ENCODE measurements at regions of chr13 and their contacts with region 1.

Region 1: DNA sequence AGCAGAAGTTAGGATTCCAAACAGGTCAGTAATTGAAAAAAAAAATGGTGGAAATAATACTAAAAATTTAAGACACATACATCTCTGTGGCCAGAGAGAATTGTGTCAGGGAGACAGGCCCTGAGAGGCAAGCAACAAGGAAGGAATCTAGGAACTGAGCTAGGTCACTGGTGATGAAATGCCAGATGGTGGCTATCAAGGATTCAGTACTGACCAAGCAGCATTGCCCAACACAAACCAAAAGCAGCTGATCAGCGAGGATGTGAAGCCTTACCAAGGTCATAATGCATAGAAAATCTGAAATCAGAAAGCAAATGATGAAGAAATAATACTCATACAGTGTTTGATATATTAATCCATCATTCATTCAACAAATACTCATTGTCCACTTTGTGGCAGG is 905.0 kb downstream of the GPC5 start:
- DNase-seq: peak in 3 of 4 experiments; percentile 11 to 18 (median 17)
- ATAC-seq: peak; percentile 24; the same call in 2 of the 3 replicates
- H3K4me3 ChIP-seq: no peak overlapping the region
- H3K27ac ChIP-seq: no peak overlapping the region
- H3K4me1 ChIP-seq: no peaks in the 10 kb centered on the region
- H3K27me3 ChIP-seq: no peaks in the 10 kb centered on the region
- CTCF ChIP-seq: no peak
- EP300 ChIP-seq: no peak
- POLR2A ChIP-seq: no peak
- RAD21 ChIP-seq: no peak

Region 2: GRCh38 chr13:91592056-91593014 is 711.1 kb before region 1 on chr13:
- CTCF ChIA-PET with region 1: no interaction called
- POLR2A ChIA-PET with region 1: no interaction called
- in situ Hi-C with region 1: loop called (anchors 10 kb)
- intact Hi-C with region 1: no loop called
- DNase-seq: no peak
- ATAC-seq: peak; percentile 43
- H3K4me3 ChIP-seq: no peak overlapping the region
- H3K27ac ChIP-seq: no peak overlapping the region
- H3K4me1 ChIP-seq: no peaks in the 10 kb centered on the region
- H3K27me3 ChIP-seq: no peaks in the 10 kb centered on the region
- CTCF ChIP-seq: no peak; a peak in 1 of 6 replicates
- EP300 ChIP-seq: no peak
- POLR2A ChIP-seq: no peak
- RAD21 ChIP-seq: no peak

Measured in K562 (cell line).